AG04450 (cell line): ENCODE measurements at regions of chr7 and their contacts with region 1.

Region 1: GRCh38 chr7:102912742-102913141 is at the start of gene LRRC17:
- DNase-seq: peak; percentile 93
- H3K4me3 ChIP-seq: peak within 1 kb of the TSS; percentile 71
- H3K27ac ChIP-seq: peak within 1 kb of the TSS; percentile 83
- H3K27me3 ChIP-seq: no peaks in the 10 kb centered on the region
- CTCF ChIP-seq: no peak
- polyA plus RNA-seq, gene LRRC17: 813 and 964 TPM in 2 replicates

Region 2: DNA sequence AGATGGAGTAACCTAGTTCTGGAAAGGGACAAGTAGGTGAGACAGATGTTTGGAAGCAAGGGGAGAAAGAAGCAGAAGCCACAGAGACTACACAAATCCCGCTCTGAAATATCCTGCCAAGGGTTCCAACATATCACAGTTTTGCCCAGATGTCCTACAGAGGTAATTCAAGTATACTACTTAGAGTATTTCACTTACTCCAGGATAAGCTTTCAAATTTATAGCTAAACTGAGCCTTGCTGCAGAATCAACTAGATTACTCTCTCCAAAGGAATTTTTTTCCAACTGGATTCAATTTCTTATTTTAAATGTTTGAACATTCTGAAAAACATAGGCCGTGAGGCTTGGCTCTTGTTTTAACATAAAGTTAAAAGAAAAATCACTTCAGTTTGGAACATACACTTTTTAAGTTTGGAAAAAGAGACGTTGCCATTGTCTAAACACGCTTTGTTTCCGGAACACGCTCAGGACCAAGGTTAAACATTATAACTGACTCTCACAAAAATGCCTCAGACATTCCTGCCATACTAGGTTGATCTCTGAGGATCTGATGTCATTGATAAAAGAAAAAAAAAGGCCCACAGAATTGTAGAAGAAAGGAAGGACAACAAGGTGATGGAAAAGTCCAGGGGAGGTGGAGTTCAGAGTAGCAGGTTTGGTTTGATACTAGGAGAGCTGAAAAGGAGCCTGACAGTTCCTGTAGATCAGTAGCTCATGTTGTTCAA is 89.2 kb before region 1 on chr7:
- CTCF ChIA-PET with region 1: no interaction called
- POLR2A ChIA-PET with region 1: interaction called, 11 read pairs
- DNase-seq: no peak
- H3K4me3 ChIP-seq: no peak overlapping the region
- H3K27ac ChIP-seq: no peak overlapping the region
- H3K27me3 ChIP-seq: no peaks in the 10 kb centered on the region
- CTCF ChIP-seq: no peak

Region 3: GRCh38 chr7:102874166-102874829 is 38.4 kb before region 1 on chr7:
- CTCF ChIA-PET with region 1: no interaction called
- POLR2A ChIA-PET with region 1: interaction called, 17 read pairs
- DNase-seq: peak; percentile 74
- H3K4me3 ChIP-seq: no peak overlapping the region
- H3K27ac ChIP-seq: peak overlapping the region; percentile 89
- H3K27me3 ChIP-seq: no peaks in the 10 kb centered on the region
- CTCF ChIP-seq: no peak

Region 4: GRCh38 chr7:102891693-102892261 is 21.0 kb before region 1 on chr7:
- CTCF ChIA-PET with region 1: interaction called, 3 read pairs
- POLR2A ChIA-PET with region 1: interaction called, 22 read pairs
- DNase-seq: peak; percentile 61
- H3K4me3 ChIP-seq: no peak overlapping the region
- H3K27ac ChIP-seq: no peak overlapping the region
- H3K27me3 ChIP-seq: no peaks in the 10 kb centered on the region
- CTCF ChIP-seq: no peak

Region 5: DNA sequence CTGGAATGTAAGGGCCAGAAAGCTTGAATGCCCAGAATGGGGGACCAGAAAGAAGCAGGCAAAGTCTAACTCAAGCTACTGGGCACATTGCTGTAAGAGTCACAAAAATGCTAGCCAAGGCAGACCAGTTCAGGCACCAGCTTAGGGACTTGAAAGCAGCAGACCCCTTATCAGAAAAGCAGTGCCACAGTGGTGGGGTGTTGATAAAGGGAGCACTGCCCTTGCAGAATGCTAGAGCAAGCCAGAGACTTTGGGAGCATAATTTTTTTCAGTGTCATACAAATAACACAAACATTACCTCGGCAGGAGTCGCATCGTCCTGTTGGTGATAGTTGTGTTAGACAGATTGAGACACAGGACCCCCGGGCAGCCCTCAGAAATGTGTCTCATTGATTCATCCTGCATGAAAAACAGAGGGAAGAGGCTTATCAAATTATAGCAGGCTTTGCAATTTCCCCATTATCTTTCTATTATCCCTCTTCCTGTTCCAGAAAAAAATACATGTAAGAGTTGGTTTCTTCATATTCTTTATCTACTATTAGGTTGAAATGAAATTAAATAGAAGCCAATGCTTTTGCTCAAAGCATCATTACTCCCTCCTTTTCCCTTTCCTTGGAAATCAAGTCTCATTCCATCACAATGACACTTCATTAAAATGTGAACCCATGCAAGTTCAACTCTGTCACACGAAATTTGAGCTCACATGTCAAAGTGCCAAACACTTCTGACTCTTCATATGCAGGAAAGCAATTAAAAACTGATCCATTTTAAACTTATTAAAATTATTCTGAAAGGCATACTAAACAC is 13.4 kb after region 1 on chr7:
- CTCF ChIA-PET with region 1: interaction called, 19 read pairs
- POLR2A ChIA-PET with region 1: interaction called, 6 read pairs
- DNase-seq: no peak
- H3K4me3 ChIP-seq: no peak overlapping the region
- H3K27ac ChIP-seq: peak overlapping the region; percentile 59
- H3K27me3 ChIP-seq: no peaks in the 10 kb centered on the region
- CTCF ChIP-seq: no peak

Region 6: GRCh38 chr7:103031781-103032180 is 119.0 kb after region 1 on chr7:
- CTCF ChIA-PET with region 1: no interaction called
- POLR2A ChIA-PET with region 1: no interaction called
- DNase-seq: no peak
- H3K4me3 ChIP-seq: no peak overlapping the region
- H3K27ac ChIP-seq: no peak overlapping the region
- H3K27me3 ChIP-seq: no peaks in the 10 kb centered on the region
- CTCF ChIP-seq: no peak